Aorta (tissue), 5 donors: ENCODE measurements at regions of chr1 and their contacts with region 1.

Region 1: GRCh38 chr1:56578963-56579875 is at the start of gene PLPP3:
- DNase-seq: peak; percentile 93 to 94
- ATAC-seq: peak; percentile 94
- H3K4me3 ChIP-seq: peak within 1 kb of the TSS; percentile 51 to 89
- H3K27ac ChIP-seq: peak within 1 kb of the TSS in 1 of 2 donors; percentile 88
- H3K4me1 ChIP-seq: peaks cover 0 to 16% of the 10 kb centered on the region in 2 donors
- H3K27me3 ChIP-seq: no peaks in the 10 kb centered on the region
- total RNA-seq, gene PLPP3: 76.2 to 112 TPM

Region 2: GRCh38 chr1:55375617-55376258 is 1203.5 kb before region 1 on chr1:
- intact Hi-C with region 1: loop called (anchors 2 to 5 kb)
- DNase-seq: no peak
- ATAC-seq: peak; percentile 69
- H3K4me3 ChIP-seq: no peak overlapping the region
- H3K27ac ChIP-seq: no peak overlapping the region
- H3K4me1 ChIP-seq: no peaks in the 10 kb centered on the region
- H3K27me3 ChIP-seq: no peaks in the 10 kb centered on the region

Region 3: GRCh38 chr1:55506686-55507577 is 1072.3 kb before region 1 on chr1:
- intact Hi-C with region 1: loop called in 1 of 2 experiments (anchors 10 kb)
- DNase-seq: no peak
- ATAC-seq: no peak
- H3K4me3 ChIP-seq: no peak overlapping the region
- H3K27ac ChIP-seq: no peak overlapping the region
- H3K4me1 ChIP-seq: peaks cover 0 to 7% of the 10 kb centered on the region in 2 donors
- H3K27me3 ChIP-seq: no peaks in the 10 kb centered on the region

Region 4: GRCh38 chr1:55868026-55868425 is 711.2 kb before region 1 on chr1:
- intact Hi-C with region 1: loop called in 1 of 2 experiments (anchors 5 kb)
- DNase-seq: no peak
- ATAC-seq: no peak
- H3K4me3 ChIP-seq: no peak overlapping the region
- H3K27ac ChIP-seq: no peak overlapping the region
- H3K4me1 ChIP-seq: peaks cover 1 to 3% of the 10 kb centered on the region in 2 donors
- H3K27me3 ChIP-seq: no peaks in the 10 kb centered on the region

Region 5: GRCh38 chr1:56074007-56074651 is 505.1 kb before region 1 on chr1:
- intact Hi-C with region 1: loop called (anchors 5 kb)
- DNase-seq: peak; percentile 85 to 88
- ATAC-seq: peak; percentile 88
- H3K4me3 ChIP-seq: no peak overlapping the region
- H3K27ac ChIP-seq: peak overlapping the region; percentile 57 to 80
- H3K4me1 ChIP-seq: peaks cover 6 to 17% of the 10 kb centered on the region in 2 donors
- H3K27me3 ChIP-seq: no peaks in the 10 kb centered on the region

Region 6: GRCh38 chr1:56169856-56170255 is 409.4 kb before region 1 on chr1:
- intact Hi-C with region 1: loop called in 1 of 2 experiments (anchors 10 kb)
- DNase-seq: no peak
- ATAC-seq: no peak
- H3K4me3 ChIP-seq: no peak overlapping the region
- H3K27ac ChIP-seq: no peak overlapping the region
- H3K4me1 ChIP-seq: peaks cover 2% of the 10 kb centered on the region in 2 donors
- H3K27me3 ChIP-seq: no peaks in the 10 kb centered on the region

Region 7: GRCh38 chr1:56409094-56409691 is 170.0 kb before region 1 on chr1:
- intact Hi-C with region 1: loop called in 1 of 2 experiments (anchors 10 kb)
- DNase-seq: no peak
- ATAC-seq: no peak
- H3K4me3 ChIP-seq: no peak overlapping the region
- H3K27ac ChIP-seq: no peak overlapping the region
- H3K4me1 ChIP-seq: peaks cover 0 to 6% of the 10 kb centered on the region in 2 donors
- H3K27me3 ChIP-seq: no peaks in the 10 kb centered on the region

Region 8: GRCh38 chr1:56484695-56485094 is 94.5 kb before region 1 on chr1:
- intact Hi-C with region 1: no loop called
- DNase-seq: no peak
- ATAC-seq: no peak
- H3K4me3 ChIP-seq: no peak overlapping the region
- H3K27ac ChIP-seq: no peak overlapping the region
- H3K4me1 ChIP-seq: no peaks in the 10 kb centered on the region
- H3K27me3 ChIP-seq: no peaks in the 10 kb centered on the region

Region 9: DNA sequence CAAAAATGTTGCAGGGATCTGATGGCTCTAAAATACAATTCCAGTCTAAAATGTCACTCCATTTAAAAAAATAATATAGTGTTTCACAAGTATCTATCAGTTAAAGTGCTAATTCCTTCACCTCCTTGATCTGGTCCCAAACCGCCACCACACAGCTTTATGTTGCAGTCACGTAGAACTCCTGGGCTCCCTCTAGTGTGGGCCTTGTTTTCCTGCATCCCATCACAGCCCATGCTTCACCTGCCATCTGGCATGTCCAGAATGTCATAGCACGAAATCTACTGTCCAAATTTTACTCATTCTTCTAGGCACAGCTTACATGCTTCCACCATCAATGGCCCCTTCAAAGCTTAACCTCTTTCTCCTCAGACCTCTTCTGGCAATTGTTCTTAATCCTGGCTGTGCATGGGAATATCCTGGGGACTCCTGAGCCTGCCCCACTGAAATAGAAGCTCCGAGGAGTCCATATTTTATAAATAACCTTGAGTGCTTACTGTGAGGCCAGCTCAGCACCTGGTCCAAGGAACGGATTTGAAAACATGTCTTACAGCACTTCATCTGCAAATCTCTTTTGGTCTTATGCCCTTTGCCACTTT is 224.4 kb after region 1 on chr1:
- intact Hi-C with region 1: no loop called
- DNase-seq: no peak
- ATAC-seq: no peak
- H3K4me3 ChIP-seq: no peak overlapping the region
- H3K27ac ChIP-seq: no peak overlapping the region
- H3K4me1 ChIP-seq: no peaks in the 10 kb centered on the region
- H3K27me3 ChIP-seq: peaks cover 0 to 3% of the 10 kb centered on the region in 2 donors